Astrocyte of the cerebellum (primary cell): ENCODE measurements at regions of chr17 and their contacts with region 1.

Region 1: DNA sequence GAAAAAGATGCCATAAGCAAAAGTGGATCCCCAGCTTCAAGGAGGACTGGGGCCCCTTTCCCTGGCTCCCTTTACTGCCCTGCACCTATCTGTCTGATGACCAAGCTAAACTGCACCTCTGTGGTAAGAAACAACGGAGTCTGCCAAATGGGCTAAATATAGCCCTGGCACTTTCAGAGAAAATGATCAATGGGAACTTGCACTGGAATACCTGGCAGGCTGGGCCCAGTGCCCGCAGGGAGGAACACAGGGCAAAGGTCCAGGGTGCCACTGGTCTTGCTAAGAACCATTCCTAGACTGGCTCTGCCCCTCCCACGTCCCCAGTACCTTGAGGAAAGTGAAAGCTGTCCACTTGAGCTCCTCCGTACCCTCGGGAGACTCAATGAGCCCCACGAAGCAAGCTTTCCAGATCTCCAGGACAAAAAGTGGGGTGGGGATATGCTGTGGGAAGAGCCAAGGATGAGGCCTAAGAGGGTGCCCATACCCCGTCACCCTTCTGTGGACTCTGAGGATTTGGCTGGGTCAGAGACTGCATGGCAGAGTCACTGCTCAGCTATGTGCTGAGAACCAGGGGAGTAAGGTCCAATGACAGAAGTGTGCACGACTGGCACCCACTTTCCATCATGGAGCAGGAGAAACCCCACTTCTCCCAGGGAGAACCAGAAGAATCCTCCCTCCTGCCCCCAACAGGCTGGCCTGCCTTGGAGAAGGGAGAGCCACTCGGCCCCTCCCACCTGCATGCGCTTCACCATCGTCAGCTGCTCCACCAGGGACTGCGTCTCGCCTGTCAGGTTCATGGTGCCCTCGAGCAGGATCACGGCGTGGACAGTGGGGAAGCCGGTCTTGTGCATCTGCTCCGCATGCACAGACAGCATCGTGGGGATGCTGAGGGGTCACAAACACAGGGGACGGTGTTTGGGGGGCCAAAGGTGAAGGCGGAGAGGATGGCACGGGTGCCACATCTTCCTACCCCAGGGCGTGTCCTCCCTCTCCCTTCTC is 17.4 kb downstream of the CSF3 start:
- DNase-seq: no peak
- H3K4me3 ChIP-seq: no peak overlapping the region
- CTCF ChIP-seq: no peak

Region 2: GRCh38 chr17:39979893-39980350 is 52.7 kb before region 1 on chr17:
- in situ Hi-C with region 1: loop called (anchors 5 kb)
- DNase-seq: no peak
- H3K4me3 ChIP-seq: peak overlapping the region; percentile 88
- CTCF ChIP-seq: peak; percentile 17

Region 3: DNA sequence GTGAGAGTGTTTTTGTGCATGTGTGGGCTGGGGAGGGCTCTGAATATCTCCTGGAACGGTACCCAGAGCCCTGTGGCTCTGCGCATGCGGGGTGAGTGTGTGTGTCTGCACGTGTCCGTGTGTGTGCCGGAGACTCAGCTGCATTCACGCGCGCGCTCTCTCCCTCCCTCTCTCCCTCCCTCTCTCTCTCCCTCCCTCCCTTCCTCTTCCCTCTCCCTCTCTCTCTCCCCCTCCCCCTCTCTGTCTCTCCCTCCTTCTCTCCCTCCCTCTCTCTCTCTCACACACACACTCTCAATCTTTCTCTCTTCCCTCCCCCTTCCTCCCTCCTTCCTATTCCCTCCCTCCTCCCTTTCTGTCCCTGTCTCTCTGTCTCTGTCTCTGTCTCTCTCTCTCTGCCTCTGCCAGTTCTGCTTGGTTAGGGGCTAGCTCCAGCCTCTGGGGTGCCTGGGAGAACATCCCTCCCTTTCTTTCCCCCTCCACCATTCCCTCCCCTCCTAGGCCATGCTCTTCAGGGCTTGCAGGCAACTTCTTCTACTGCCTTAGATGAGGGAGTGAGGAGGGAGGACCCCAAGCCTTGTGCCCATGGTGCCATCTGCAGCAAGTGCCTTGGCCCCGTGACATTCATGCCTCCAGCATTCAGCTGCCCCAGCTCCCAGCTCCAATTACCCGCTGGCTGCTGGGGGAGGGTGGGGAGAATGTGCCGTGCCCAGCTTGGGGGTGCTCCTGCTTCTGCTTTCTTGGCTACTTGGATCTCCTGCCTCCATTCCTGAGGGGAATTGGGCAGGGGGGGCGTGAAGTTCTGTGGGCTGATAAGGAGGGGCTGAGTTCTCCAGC is 36.5 kb after region 1 on chr17:
- in situ Hi-C with region 1: loop called (anchors 5 kb)
- DNase-seq: no peak
- H3K4me3 ChIP-seq: peak overlapping the region; percentile 12
- CTCF ChIP-seq: no peak

Region 4: GRCh38 chr17:40113110-40113906 is 80.7 kb after region 1 on chr17:
- in situ Hi-C with region 1: loop called (anchors 5 kb)
- DNase-seq: peak; percentile 90
- H3K4me3 ChIP-seq: peak overlapping the region; percentile 13
- CTCF ChIP-seq: peak; percentile 87